Activated naive CD4-positive, alpha-beta T cell treated with anti-CD3 and anti-CD28 coated beads, Interleukin-2, amount 10 ng/mL, durations not matched to agents 7 days and 5 days (primary cell): ENCODE measurements at regions of chr21 and their contacts with region 1.

Region 1: DNA sequence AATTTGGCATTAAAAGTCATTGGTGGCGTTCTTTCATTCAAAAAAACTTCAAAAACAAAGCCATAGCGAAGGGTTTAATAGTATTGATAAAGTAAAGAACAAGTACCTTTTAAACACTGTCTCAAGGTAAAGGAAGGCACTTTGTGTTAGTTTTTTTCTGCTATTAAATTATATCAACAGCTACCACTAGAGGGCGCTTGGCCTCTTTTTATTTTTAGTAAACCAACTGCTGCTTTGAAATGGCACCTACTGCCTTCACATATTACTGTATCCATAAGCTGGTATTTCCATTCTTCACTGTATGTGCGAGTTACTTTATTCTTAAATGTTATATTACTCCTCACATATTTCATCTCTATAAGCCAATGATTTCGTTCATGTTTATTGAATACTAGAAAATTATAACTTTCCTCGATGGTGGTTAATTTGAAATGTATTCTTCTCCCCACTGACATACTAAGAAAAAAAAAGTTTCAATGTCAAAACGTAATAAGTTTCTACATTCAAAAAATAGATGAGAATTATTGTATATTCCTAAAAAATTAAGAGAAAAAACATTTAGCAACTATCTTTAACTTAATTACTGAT is 125.7 kb upstream of the CXADR start:
- DNase-seq: peak; percentile 53
- H3K4me3 Mint-ChIP-seq: no peak overlapping the region
- H3K27ac Mint-ChIP-seq: no peak overlapping the region
- H3K4me1 Mint-ChIP-seq: no peaks in the 10 kb centered on the region
- H3K27me3 Mint-ChIP-seq: no peaks in the 10 kb centered on the region

Region 2: DNA sequence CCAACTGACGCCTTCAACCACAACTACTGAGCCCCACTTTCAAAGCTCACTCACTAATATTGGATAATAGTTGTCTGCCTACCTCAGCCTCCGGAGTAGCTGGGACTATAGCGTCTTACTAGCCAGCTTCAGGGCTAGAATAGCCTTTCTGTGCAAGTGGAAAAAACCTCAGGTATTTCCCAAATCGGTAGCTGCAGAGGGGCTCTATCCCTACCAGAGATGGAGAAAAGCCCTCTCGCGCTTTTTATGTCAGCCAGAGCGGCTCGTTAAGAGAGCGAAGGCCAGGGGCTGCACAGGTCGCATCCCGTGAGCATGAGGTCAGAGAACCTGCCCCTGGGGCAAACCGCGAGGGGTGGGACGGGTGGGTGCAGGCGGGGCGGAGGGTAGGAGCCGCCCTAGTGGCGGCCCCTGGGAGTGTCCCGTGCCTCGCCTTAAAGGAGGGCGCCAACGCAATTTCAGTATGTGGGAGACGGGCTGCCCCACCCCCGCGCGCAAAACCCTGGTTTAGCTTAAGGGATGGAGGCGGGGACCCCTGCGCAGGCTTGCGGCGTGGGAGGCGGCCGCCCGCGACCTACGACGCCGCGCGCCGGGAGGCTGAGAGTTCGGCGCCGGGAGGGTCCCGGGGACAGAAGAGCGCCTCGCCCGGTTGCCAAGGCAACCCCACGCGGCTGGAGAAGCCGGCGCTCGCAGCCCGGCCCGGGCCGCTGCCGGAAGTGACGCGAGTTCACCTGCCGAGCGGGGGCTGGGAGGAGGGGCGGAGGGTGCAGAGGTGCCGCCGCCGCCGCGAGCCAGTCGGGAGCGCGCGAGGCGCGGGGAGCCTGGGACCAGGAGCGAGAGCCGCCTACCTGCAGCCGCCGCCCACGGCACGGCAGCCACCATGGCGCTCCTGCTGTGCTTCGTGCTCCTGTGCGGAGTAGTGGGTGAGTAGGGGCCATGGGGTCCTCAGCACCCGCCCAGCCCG is 125.4 kb after region 1 on chr21 and contains the start of gene CXADR:
- CTCF ChIA-PET with region 1: interaction called, 10 read pairs
- DNase-seq: peak; percentile 83
- H3K4me3 Mint-ChIP-seq: peak within 1 kb of the TSS; percentile 81
- H3K27ac Mint-ChIP-seq: peak within 1 kb of the TSS; percentile 38
- H3K4me1 Mint-ChIP-seq: peaks cover 21% of the 10 kb centered on the region
- H3K27me3 Mint-ChIP-seq: peaks cover 57% of the 10 kb centered on the region

Region 3: GRCh38 chr21:17554679-17555465 is 167.7 kb after region 1 on chr21:
- CTCF ChIA-PET with region 1: interaction called, 11 read pairs
- DNase-seq: no peak
- H3K4me3 Mint-ChIP-seq: no peak overlapping the region
- H3K27ac Mint-ChIP-seq: no peak overlapping the region
- H3K4me1 Mint-ChIP-seq: no peaks in the 10 kb centered on the region
- H3K27me3 Mint-ChIP-seq: no peaks in the 10 kb centered on the region

Region 4: DNA sequence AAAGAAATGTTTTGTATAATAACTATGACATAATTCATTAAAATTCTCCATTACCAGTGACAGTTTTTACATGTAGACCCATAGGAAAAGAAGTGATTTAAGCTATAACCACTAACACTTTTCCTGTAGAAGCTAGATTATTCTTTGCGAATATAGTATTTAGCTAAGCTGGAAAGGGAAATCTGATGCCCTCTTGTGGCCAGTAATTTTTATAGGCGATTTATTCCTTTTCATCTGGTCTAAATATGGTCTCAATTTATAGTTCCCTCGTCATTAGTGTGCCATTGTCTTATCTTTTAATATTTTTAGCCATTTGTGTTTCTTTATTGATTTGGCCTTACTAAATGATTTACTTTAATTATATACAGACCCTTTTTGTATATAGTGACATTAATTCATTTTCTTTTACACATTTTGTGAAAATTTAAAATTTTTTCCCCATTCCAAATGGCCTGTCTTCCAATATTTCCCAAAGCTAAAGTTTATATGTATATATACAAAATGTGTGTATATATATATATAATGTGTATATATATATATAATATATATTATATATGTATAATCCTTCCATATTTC is 198.8 kb after region 1 on chr21:
- CTCF ChIA-PET with region 1: interaction called, 68 read pairs
- DNase-seq: no peak
- H3K4me3 Mint-ChIP-seq: no peak overlapping the region
- H3K27ac Mint-ChIP-seq: no peak overlapping the region
- H3K4me1 Mint-ChIP-seq: no peaks in the 10 kb centered on the region
- H3K27me3 Mint-ChIP-seq: no peaks in the 10 kb centered on the region